Testis (tissue), 5 donors: ENCODE measurements at regions of chr7 and their contacts with region 1.

Region 1: GRCh38 chr7:100852048-100852872 is at the start of gene SLC12A9:
- DNase-seq: peak; percentile 91
- H3K4me3 ChIP-seq: peak within 1 kb of the TSS; percentile 63 to 74
- H3K27ac ChIP-seq: peak within 1 kb of the TSS in 1 of 2 donors; percentile 47
- H3K4me1 ChIP-seq: peaks cover 6% of the 10 kb centered on the region
- H3K27me3 ChIP-seq: no peaks in the 10 kb centered on the region
- CTCF ChIP-seq: peak; percentile 83 to 89 (median 88)
- POLR2A ChIP-seq: no peak
- total RNA-seq, gene SLC12A9: 13.8 to 18.9 TPM

Region 2: DNA sequence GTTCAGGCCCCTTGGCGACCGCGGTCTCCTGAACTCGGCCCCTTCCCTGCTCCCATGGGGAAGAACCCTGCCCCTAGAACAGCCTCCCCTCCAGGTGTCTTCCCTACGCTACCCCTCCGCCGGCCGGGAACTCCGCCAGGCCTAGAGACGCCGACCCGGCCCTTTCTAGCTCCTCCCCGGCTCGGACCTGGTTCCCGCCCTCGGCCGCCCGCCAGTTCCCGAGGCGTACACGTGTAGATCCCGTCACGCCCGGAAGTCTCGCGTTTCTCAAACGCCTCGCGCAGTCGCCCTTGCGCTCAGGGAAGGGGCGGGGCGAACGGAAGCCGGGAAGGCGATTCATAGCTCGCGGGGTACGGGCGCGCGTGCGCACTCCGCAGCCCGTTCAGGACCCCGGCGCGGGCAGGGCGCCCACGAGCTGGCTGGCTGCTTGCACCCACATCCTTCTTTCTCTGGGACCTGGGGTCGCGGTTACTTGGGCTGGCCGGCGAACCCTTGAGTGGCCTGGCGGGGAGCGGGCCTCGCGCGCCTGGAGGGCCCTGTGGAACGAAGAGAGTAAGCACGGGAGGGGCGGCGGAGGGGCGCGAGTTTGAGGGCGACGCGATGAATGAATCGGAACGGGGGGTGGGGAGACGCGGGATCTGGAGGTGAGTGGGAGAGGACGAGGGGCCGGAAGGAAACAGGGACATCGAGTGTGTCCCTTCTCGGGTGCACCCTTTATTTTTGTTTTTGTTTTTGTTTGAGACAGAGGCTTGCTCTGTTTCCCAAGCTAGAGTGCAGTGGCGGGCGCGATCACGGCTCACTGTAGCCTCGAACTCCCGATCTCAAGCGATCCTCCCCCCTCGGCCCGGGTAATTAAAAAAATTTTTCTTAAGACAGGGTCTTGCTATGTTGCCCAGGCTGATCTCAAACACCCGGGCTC is 146.2 kb before region 1 on chr7 and contains the start of gene POP7:
- intact Hi-C with region 1: loop called (anchors 5 kb)
- DNase-seq: peak; percentile 99
- H3K4me3 ChIP-seq: peak within 1 kb of the TSS; percentile 75 to 77
- H3K27ac ChIP-seq: peak within 1 kb of the TSS; percentile 83 to 90
- H3K4me1 ChIP-seq: peaks cover 7% of the 10 kb centered on the region
- H3K27me3 ChIP-seq: no peaks in the 10 kb centered on the region
- CTCF ChIP-seq: peak in 1 of 3 experiments; percentile 12
- POLR2A ChIP-seq: no peak
- total RNA-seq, gene POP7: 33.6 to 39.4 TPM

Region 3: GRCh38 chr7:100803398-100804233 is 48.6 kb before region 1 on chr7:
- intact Hi-C with region 1: loop called (anchors 5 kb)
- DNase-seq: peak; percentile 96
- H3K4me3 ChIP-seq: no peak overlapping the region
- H3K27ac ChIP-seq: peak overlapping the region; percentile 83 to 86
- H3K4me1 ChIP-seq: peaks cover 48% of the 10 kb centered on the region
- H3K27me3 ChIP-seq: no peaks in the 10 kb centered on the region
- CTCF ChIP-seq: no peak
- POLR2A ChIP-seq: no peak

Region 4: DNA sequence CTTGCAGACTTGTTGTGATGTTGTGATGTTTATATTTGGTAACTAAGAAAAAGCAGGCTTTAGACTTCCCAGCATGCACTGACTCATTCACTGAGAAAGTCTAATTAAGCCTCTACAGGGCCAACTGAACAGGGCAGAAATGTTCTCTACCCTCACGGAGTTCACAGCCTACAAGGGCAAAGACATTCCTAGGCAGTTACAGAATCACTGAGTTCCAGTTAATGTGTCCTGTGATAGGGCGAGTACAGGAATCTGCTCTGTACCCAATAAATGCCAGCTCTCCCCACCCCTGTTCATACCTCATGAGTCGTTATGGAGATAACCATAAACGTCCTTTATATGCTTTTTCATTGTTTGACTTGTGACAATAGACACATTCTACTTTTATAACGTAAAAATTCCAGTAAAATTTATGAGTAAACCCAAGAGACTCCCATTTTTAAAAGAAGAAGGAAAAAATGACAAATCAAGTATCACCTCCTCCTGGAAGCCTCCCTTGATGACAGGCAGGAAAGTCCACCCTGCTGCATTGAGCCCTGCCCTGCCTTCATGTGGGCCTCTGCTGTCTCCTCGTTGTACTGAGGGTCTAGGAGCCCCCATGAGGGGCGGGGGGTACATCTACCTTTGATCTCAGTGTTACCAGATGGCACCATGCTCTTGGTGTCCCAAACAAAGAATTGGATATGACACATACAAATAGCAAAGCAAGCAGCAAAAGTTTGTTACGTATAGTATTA is 131.4 kb after region 1 on chr7:
- intact Hi-C with region 1: no loop called
- DNase-seq: no peak
- H3K4me3 ChIP-seq: no peak overlapping the region
- H3K27ac ChIP-seq: no peak overlapping the region
- H3K4me1 ChIP-seq: no peaks in the 10 kb centered on the region
- H3K27me3 ChIP-seq: no peaks in the 10 kb centered on the region
- CTCF ChIP-seq: no peak
- POLR2A ChIP-seq: no peak